H1 (cell line): ENCODE measurements at regions of chr16 and their contacts with region 1.

Region 1: GRCh38 chr16:70478912-70479341 is 24.5 kb downstream of the FCSK start:
- DNase-seq: no peak
- H3K4me3 ChIP-seq: no peak overlapping the region
- H3K27ac ChIP-seq: 0 out of 2 replicates have a peak overlapping the region, but pooled peaks have one; percentile 2
- H3K4me1 ChIP-seq: peaks cover 0 to 8% (median under 1%) of the 10 kb centered on the region in 4 experiments; a peak in 2 of 7 replicates
- H3K27me3 ChIP-seq: no peaks in the 10 kb centered on the region
- CTCF ChIP-seq: no peak
- EP300 ChIP-seq: no peak
- POLR2A ChIP-seq: no peak
- RAD21 ChIP-seq: no peak

Region 2: GRCh38 chr16:70490261-70490803 is 11.4 kb after region 1 on chr16:
- CTCF ChIA-PET with region 1: interaction called, 13 read pairs
- POLR2A ChIA-PET with region 1: interaction called, 4 read pairs
- DNase-seq: no peak
- H3K4me3 ChIP-seq: no peak overlapping the region
- H3K27ac ChIP-seq: no peak overlapping the region
- H3K4me1 ChIP-seq: no peaks in the 10 kb centered on the region
- H3K27me3 ChIP-seq: no peaks in the 10 kb centered on the region
- CTCF ChIP-seq: no peak
- EP300 ChIP-seq: no peak
- POLR2A ChIP-seq: no peak
- RAD21 ChIP-seq: no peak

Region 3: DNA sequence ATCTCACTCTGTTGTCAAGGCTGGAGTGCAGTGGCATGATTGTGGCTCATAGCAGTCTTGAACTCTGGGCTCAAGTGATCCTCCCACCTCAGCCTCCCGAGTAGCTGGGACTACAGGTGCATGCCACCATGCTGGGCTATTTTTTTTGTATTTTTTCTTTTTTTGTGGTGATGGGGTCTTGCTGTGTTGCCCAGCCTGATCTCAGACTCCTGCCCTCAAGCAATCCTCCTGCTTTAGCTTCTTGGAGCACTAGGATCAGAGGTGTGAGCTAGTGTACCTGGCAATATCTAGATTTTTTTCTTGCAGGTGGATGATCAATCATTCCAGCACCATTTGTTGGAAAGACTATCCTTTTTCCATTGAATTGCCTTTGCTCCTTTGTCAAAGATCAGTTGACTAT is 114.6 kb after region 1 on chr16:
- CTCF ChIA-PET with region 1: no interaction called
- POLR2A ChIA-PET with region 1: no interaction called
- DNase-seq: no peak
- H3K4me3 ChIP-seq: no peak overlapping the region
- H3K27ac ChIP-seq: no peak overlapping the region
- H3K4me1 ChIP-seq: peaks cover 2 to 7% (median 3%) of the 10 kb centered on the region in 4 experiments; a peak in 4 of 7 replicates
- H3K27me3 ChIP-seq: no peaks in the 10 kb centered on the region
- CTCF ChIP-seq: no peak
- EP300 ChIP-seq: no peak
- POLR2A ChIP-seq: no peak
- RAD21 ChIP-seq: no peak